Activated naive CD4-positive, alpha-beta T cell treated with anti-CD3 and anti-CD28 coated beads for 36 hours (primary cell): ENCODE measurements at regions of chr12 and their contacts with region 1.

Region 1: DNA sequence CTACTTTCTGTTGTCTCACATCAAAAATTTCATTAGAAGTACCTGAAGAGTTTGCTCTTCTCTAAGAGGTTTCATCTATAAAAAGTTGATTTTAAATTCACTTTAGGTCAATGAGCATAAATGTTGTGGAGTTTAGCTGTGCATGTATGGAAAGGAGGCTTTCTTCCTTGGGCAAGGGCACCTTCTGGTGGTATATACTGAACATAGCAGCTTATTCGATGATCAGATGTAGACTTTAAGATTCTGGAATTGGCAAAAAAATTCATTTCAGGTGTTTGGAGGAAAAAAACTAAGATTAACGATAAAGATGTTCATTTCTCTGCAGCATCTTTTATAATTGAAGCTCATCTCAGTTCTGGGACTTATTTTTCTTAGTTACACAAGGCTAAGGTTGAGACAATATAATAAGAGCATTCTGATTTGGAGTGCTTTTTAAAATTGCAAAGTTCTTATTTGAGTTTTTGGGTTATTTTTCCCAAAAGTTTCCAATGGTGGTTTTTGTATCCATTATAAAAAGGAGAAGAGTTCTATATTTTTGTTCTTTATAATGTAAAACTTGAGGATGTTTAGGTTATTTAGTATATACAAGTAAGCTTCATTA is 46.8 kb downstream of the TMEM117 start:
- DNase-seq: peak; percentile 48
- H3K4me3 Mint-ChIP-seq: no peak overlapping the region
- H3K27ac Mint-ChIP-seq: no peak overlapping the region
- H3K4me1 Mint-ChIP-seq: no peaks in the 10 kb centered on the region
- H3K27me3 Mint-ChIP-seq: no peaks in the 10 kb centered on the region

Region 2: GRCh38 chr12:42589465-42590329 is 1293.0 kb before region 1 on chr12 and contains the start of gene PRICKLE1:
- CTCF ChIA-PET with region 1: no interaction called
- intact Hi-C with region 1: loop called (anchors 5 kb)
- DNase-seq: peak; percentile 17
- H3K4me3 Mint-ChIP-seq: peak within 1 kb of the TSS; percentile 65
- H3K27ac Mint-ChIP-seq: no peak within 1 kb of the TSS
- H3K4me1 Mint-ChIP-seq: peaks cover 14% of the 10 kb centered on the region
- H3K27me3 Mint-ChIP-seq: peaks cover 59% of the 10 kb centered on the region
- total RNA-seq, gene PRICKLE1: not detected

Region 3: DNA sequence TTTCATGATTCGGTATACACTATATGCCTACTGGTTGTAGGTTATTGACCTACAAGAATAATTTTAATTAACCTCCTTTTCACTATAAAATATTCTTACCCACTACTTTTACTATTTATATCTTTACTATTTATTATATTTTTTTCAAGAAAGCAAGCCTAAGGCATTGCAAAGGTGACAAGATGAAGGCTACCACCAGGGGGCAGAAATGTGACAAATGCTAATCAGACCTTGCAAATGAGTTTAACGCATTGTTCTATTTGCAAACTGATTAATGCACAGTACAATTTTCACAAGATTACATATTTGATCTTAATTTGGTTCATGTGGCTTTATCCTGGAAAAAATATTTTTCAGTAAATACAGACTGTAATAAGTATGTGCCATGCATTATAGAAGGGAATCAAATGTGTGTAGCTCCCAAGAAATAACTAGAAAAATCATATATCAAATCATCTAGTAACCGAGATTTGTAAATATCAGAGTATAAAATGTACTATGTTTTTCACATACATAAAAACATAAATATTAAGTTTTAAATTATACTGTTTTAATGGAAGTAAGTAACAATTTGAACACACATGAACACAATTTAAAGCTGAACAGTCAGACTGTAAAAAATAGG is 437.6 kb before region 1 on chr12:
- CTCF ChIA-PET with region 1: interaction called, 20 read pairs
- intact Hi-C with region 1: loop called (anchors 1 kb)
- DNase-seq: peak; percentile 72
- H3K4me3 Mint-ChIP-seq: no peak overlapping the region
- H3K27ac Mint-ChIP-seq: no peak overlapping the region
- H3K4me1 Mint-ChIP-seq: no peaks in the 10 kb centered on the region
- H3K27me3 Mint-ChIP-seq: peaks cover 8% of the 10 kb centered on the region

Region 4: GRCh38 chr12:43758728-43759563 is 123.7 kb before region 1 on chr12 and contains the starts of genes IRAK4 and PUS7L:
- CTCF ChIA-PET with region 1: interaction called, 13 read pairs
- intact Hi-C with region 1: loop called (anchors 1 kb)
- DNase-seq: peak; percentile 96
- H3K4me3 Mint-ChIP-seq: peak within 1 kb of the TSS; percentile 97
- H3K27ac Mint-ChIP-seq: peak within 1 kb of the TSS; percentile 96
- H3K4me1 Mint-ChIP-seq: peaks cover 58% of the 10 kb centered on the region
- H3K27me3 Mint-ChIP-seq: no peaks in the 10 kb centered on the region
- total RNA-seq, gene IRAK4: 24.2 to 24.5 TPM
- total RNA-seq, gene PUS7L: 8.1 to 10.5 TPM

Region 5: DNA sequence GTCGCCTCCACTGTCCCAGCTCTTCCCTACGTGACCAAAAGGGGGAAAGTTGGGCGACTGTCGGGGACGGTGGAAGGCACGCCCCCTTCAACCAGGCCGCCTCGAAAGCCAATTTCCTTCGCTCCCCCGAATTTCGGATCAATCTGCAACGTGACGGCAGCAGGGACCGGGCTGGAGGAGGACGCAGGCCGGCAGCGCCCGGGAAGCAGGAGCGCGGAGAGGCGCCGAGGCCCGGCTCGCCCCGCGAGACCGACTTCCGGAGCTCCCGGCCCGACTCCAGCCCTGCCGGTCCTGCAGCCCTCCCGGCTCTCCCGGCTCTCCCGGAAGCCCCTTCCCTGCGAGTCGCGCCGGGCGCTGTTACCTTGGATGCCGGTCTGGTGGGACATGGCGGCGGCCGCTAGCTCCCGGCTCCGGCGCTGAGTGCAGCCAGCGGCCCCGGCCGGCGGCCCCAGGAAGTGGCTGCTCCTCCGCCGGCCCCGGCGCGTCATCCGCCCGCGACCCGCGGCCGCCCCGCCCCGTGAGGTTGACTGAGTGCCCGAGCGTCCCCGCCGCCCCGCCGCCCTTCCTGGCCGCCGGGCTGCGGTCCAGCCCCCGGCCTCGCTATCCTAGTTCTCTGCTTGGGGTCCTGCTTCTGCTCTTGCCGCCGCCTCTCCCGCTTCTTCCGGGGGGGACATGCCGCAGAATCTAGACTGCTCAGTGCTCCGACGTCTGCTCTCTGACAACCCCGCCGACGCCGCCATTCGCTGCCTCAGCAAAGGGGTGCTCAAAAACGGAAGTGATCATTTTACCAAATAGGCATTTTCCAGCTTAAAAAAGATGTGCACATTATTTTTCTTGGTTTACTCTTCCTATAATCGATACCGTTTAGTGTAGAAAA is 76.6 kb before region 1 on chr12 and contains the start of gene TWF1:
- CTCF ChIA-PET with region 1: interaction called, 11 read pairs
- intact Hi-C with region 1: loop called (anchors 1 kb)
- DNase-seq: peak; percentile 88
- H3K4me3 Mint-ChIP-seq: peak within 1 kb of the TSS; percentile 98
- H3K27ac Mint-ChIP-seq: peak within 1 kb of the TSS; percentile 100
- H3K4me1 Mint-ChIP-seq: peaks cover 39% of the 10 kb centered on the region
- H3K27me3 Mint-ChIP-seq: no peaks in the 10 kb centered on the region
- total RNA-seq, gene TWF1: 12.9 to 15.3 TPM

Region 6: DNA sequence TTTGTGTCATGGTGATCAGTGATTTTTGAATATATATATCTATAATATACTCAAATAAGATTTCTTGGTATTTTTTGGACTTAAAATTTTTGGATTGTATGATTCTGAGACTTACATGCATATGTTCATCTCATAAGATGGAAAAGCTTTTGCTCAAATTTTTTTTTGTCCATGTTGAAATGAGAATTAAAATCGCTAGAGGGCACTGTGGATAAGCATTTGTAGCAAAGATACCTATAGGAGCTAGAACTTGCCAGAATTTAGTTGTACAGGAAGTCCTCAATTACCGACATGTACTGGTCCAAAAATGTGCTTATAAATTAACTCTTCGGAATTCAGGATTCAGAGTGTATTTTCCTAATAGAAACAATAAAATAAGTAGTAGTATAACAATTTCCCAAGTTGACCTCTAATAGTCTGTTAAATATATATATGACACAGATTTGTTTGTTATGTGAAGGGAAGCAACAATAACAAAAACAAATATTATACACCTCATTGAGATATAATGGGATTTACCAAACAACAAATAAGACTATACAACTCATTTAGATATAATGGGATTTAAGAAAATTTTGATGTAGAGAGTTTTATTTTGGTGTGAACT is 132.8 kb after region 1 on chr12:
- CTCF ChIA-PET with region 1: no interaction called
- intact Hi-C with region 1: no loop called
- DNase-seq: no peak
- H3K4me3 Mint-ChIP-seq: no peak overlapping the region
- H3K27ac Mint-ChIP-seq: no peak overlapping the region
- H3K4me1 Mint-ChIP-seq: no peaks in the 10 kb centered on the region
- H3K27me3 Mint-ChIP-seq: no peaks in the 10 kb centered on the region